Mammary epithelial cell (primary cell): ENCODE measurements at regions of chr17 and their contacts with region 1.

Region 1: GRCh38 chr17:70137451-70138230 is 31.7 kb upstream of the KCNJ2 start:
- DNase-seq: peak; percentile 84
- H3K4me3 ChIP-seq: peak overlapping the region; percentile 39 to 46 (median 39)
- H3K27ac ChIP-seq: peak overlapping the region; percentile 95
- H3K4me1 ChIP-seq: peaks cover 20% of the 10 kb centered on the region
- H3K27me3 ChIP-seq: no peaks in the 10 kb centered on the region
- CTCF ChIP-seq: peak in 1 of 2 donors; percentile 12

Region 2: GRCh38 chr17:69733171-69734012 is 404.2 kb before region 1 on chr17:
- CTCF ChIA-PET with region 1: no interaction called
- dilution Hi-C with region 1: no loop called
- in situ Hi-C with region 1: loop called in 1 of 2 experiments (anchors 25 kb)
- intact Hi-C with region 1: no loop called
- DNase-seq: peak; percentile 93
- H3K4me3 ChIP-seq: no peak overlapping the region
- H3K27ac ChIP-seq: peak overlapping the region; percentile 53
- H3K4me1 ChIP-seq: peaks cover 43% of the 10 kb centered on the region
- H3K27me3 ChIP-seq: no peaks in the 10 kb centered on the region
- CTCF ChIP-seq: peak in 1 of 2 donors; percentile 6

Region 3: DNA sequence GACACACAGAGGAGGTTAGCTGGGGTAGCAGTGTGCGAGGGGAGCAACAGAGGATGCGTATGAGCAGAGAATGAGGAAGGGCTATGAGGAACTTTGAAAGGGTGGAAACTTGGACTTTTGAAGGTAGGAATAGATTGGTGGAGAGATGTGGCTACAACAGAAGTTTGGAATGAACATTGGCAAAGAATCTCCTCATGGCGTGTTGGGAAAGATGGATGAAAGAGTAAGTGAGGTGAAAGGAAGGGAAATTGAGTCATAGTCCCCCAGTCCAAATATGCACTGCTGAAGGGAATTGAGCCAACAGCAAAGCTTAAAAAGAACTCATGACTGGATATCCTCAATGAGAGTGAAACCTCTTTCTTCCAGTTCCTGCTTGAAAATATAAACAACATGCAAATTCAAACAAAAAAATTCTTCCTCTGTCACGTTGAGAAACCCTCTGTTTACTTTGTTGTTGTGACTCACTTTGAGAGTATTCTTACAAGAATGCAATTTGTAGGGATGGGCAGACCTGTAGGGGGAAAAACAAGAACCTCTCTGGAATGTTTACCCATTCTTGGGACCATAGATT is 375.8 kb before region 1 on chr17:
- CTCF ChIA-PET with region 1: no interaction called
- dilution Hi-C with region 1: no loop called
- in situ Hi-C with region 1: no loop called
- intact Hi-C with region 1: loop called (anchors 1 kb)
- DNase-seq: peak; percentile 87
- H3K4me3 ChIP-seq: no peak overlapping the region
- H3K27ac ChIP-seq: peak overlapping the region; percentile 88
- H3K4me1 ChIP-seq: peaks cover 44% of the 10 kb centered on the region
- H3K27me3 ChIP-seq: no peaks in the 10 kb centered on the region
- CTCF ChIP-seq: no peak

Region 4: GRCh38 chr17:69819316-69820087 is 318.1 kb before region 1 on chr17:
- CTCF ChIA-PET with region 1: no interaction called
- dilution Hi-C with region 1: no loop called
- in situ Hi-C with region 1: no loop called
- intact Hi-C with region 1: loop called (anchors 10 kb)
- DNase-seq: no peak
- H3K4me3 ChIP-seq: no peak overlapping the region
- H3K27ac ChIP-seq: no peak overlapping the region
- H3K4me1 ChIP-seq: peaks cover 4% of the 10 kb centered on the region
- H3K27me3 ChIP-seq: no peaks in the 10 kb centered on the region
- CTCF ChIP-seq: no peak

Region 5: DNA sequence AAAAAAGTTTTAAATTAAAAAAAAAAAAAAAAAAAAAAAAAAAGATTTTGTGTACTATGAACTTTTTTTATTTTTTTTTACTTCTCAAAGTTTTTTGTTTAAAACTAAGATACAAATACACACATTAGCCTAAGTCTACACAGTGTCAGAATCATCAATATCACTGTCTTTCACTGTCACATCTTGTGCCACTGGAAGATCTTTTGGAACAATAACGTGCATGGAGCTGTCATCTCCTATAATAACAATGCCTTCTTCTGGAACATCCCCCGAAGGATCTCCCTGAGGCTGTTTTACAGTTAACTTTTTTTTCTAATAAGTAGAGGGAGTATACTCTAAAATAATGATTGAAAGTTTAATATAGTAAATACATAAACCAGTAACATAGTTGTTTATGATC is 327.4 kb after region 1 on chr17:
- CTCF ChIA-PET with region 1: no interaction called
- dilution Hi-C with region 1: no loop called
- in situ Hi-C with region 1: no loop called
- intact Hi-C with region 1: no loop called
- DNase-seq: no peak
- H3K4me3 ChIP-seq: no peak overlapping the region
- H3K27ac ChIP-seq: no peak overlapping the region
- H3K4me1 ChIP-seq: no peaks in the 10 kb centered on the region
- H3K27me3 ChIP-seq: peaks cover 2% of the 10 kb centered on the region
- CTCF ChIP-seq: no peak